ENCODE measurements at regions of chr16 and their contacts with region 1.

Region 1: DNA sequence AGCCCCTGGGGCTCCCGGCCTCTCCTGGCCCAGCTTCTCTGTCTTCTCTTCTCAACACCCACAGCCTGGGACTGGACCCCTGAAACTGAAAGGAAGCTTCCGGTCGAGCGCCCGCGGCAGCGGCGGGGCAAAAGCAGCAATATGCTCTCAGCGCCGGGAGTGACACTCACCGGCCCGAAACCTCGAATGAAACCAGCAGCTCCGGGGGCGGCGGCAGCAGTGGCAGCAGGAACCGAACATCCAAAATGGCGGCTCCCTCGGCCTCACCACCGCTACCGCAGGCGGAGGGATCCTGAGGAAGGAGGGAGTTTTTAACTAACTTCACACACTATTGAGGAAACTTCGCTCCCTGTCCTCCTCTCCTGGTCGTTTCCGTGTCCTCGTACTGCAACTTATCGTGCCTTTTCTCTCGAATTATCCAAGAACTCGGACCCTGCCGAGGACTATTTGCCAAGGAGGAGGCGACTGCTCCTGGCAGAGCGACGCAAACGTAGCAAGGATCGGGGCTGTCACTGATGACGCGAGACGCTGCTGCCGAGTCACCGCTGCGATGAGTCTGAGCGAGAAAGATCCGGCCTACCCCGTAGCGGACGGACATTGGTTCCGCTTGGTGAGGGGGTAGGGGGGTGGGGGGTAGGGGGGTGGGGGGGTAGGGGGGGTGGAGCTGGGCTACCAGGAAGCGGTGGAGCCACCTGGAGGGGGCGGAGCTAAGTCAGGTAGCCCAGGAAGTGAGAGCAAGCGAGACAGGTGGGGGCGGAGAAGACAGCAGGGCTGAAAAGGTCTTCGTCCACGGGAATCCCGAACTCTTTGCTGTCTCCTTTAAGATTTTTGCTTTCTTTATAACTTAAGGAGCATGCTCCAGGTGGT is at the start of gene AP1G1:
- DNase-seq: peak; percentile 92 to 95
- H3K4me3 ChIP-seq: peak within 1 kb of the TSS; percentile 93
- H3K27ac ChIP-seq: peak within 1 kb of the TSS; percentile 95
- H3K4me1 ChIP-seq: peaks cover 18% of the 10 kb centered on the region
- H3K27me3 ChIP-seq: no peaks in the 10 kb centered on the region
- CTCF ChIP-seq: no peak
- total RNA-seq, gene AP1G1: 60.1 and 72.5 TPM in 2 replicates

Region 2: DNA sequence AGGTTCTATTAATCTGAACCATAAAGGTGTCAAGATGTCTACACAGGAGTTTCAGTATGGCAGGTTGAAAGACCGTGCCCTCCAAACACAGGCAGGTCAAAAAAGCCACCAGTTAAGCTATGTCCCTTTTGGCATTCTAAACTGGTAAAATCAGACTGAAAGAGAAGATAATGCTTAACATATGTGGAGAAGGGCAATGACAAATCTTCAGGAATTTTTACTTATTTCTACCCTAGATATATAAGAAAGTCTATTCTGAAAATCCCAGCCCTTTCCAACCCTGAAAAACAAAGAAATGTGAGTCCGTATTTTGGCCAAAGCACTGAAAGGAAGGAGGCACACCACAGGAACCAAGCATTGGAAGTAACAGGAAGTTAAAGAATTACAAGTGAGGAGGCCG is 16.6 kb before region 1 on chr16:
- CTCF ChIA-PET with region 1: no interaction called
- POLR2A ChIA-PET with region 1: interaction called, 16 read pairs
- intact Hi-C with region 1: no loop called
- DNase-seq: no peak
- H3K4me3 ChIP-seq: no peak overlapping the region
- H3K27ac ChIP-seq: no peak overlapping the region
- H3K4me1 ChIP-seq: no peaks in the 10 kb centered on the region
- H3K27me3 ChIP-seq: no peaks in the 10 kb centered on the region
- CTCF ChIP-seq: no peak

Region 3: GRCh38 chr16:71845639-71846430 is 37.0 kb after region 1 on chr16 and contains the start of gene ATXN1L:
- CTCF ChIA-PET with region 1: no interaction called
- POLR2A ChIA-PET with region 1: no interaction called
- intact Hi-C with region 1: loop called (anchors 2 kb)
- DNase-seq: peak; percentile 75 to 92
- H3K4me3 ChIP-seq: peak within 1 kb of the TSS; percentile 89
- H3K27ac ChIP-seq: peak within 1 kb of the TSS; percentile 57
- H3K4me1 ChIP-seq: peaks cover 9% of the 10 kb centered on the region
- H3K27me3 ChIP-seq: no peaks in the 10 kb centered on the region
- CTCF ChIP-seq: no peak
- total RNA-seq, gene ATXN1L: 18.2 and 25.3 TPM in 2 replicates

Region 4: DNA sequence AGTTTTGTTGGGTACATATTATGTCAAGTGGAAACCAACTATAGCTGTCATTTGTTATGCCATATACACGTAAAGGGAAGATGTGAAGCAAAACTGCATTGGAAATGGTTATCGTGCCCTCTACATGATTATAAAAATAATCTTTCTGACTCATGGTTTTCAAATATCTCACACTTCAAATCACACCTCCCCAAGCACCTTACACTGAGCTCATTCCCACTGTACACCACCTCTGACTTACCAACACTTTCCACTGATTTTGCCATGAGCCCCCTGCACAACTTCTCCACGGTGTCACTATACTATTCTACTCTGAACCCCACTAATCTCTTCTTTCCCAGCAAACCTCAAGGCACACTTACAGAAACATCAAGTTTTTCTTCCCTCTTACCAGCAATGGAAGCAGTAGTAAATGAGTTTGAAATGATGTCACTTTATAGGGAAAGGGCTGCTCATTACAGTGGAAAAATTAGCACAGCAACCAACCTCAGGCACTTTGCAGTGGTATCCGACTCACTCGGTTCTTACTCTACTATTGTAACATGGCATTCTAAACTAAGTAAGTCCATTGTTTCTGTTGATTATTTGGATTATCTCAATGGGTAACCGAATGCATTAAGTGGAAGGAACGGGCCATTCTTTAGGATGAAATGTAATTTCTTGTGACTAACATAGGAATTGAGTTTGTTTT is 56.5 kb after region 1 on chr16:
- CTCF ChIA-PET with region 1: no interaction called
- POLR2A ChIA-PET with region 1: interaction called, 12 read pairs
- intact Hi-C with region 1: no loop called
- DNase-seq: no peak
- H3K4me3 ChIP-seq: no peak overlapping the region
- H3K27ac ChIP-seq: no peak overlapping the region
- H3K4me1 ChIP-seq: no peaks in the 10 kb centered on the region
- H3K27me3 ChIP-seq: no peaks in the 10 kb centered on the region
- CTCF ChIP-seq: no peak

Region 5: DNA sequence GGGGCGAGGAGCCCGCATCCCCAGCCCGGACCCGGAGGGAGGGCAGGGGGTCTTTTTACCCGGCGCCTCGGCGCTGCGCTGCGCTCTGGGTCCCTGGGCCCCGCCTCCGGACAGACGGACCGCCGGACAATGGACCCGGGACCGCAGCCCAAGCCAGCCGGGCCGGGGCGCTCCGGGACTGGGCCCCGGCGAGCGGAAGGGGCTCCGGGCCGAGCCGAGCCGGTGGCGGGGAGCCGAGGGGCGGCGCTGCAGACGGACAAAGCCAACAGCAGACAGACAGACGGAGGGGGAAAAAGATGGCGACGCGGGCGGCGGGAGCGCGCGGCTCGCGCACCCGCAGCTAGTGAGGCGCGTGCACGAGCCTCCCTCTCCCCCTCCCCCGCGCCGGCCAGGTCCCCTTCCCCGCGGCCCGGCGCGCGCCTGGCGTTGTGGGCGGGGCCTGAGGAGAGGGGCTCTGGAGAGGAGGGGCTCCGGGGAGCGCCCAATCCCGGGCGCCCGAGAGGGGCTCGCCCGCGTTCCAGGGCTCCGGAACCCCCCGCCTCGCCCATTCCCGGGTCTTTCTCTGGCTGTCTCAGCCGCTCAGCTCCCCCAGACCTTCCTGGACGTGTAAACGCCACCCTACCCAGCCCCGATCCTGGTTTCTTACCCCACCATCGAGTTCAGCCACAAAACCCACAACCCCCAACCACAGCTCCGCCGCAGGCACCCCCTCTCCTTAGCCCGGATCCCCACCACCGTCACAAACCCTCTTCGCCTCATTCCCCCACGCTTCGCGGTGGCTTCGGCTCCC is 75.2 kb after region 1 on chr16 and contains the start of gene ZNF821:
- CTCF ChIA-PET with region 1: no interaction called
- POLR2A ChIA-PET with region 1: interaction called, 7 read pairs
- intact Hi-C with region 1: loop called (anchors 2 kb)
- DNase-seq: peak in 1 of 2 experiments; percentile 68
- H3K4me3 ChIP-seq: peak within 1 kb of the TSS; percentile 83
- H3K27ac ChIP-seq: peak within 1 kb of the TSS; percentile 39; the same call in 1 of the 2 replicates
- H3K4me1 ChIP-seq: peaks cover 19% of the 10 kb centered on the region
- H3K27me3 ChIP-seq: no peaks in the 10 kb centered on the region
- CTCF ChIP-seq: peak; percentile 57; the same call in 1 of the 2 replicates
- total RNA-seq, gene ZNF821: 5.9 TPM in 2 replicates

Region 6: GRCh38 chr16:71894921-71895678 is 86.3 kb after region 1 on chr16 and contains the start of gene IST1:
- CTCF ChIA-PET with region 1: no interaction called
- POLR2A ChIA-PET with region 1: interaction called, 5 read pairs
- intact Hi-C with region 1: loop called (anchors 1 kb)
- DNase-seq: peak; percentile 89 to 96
- H3K4me3 ChIP-seq: peak within 1 kb of the TSS; percentile 100
- H3K27ac ChIP-seq: peak within 1 kb of the TSS; percentile 90
- H3K4me1 ChIP-seq: peaks cover 23% of the 10 kb centered on the region
- H3K27me3 ChIP-seq: no peaks in the 10 kb centered on the region
- CTCF ChIP-seq: no peak
- total RNA-seq, gene IST1: 177 and 204 TPM in 2 replicates

Region 7: GRCh38 chr16:71911121-71911520 is 102.3 kb after region 1 on chr16:
- CTCF ChIA-PET with region 1: no interaction called
- POLR2A ChIA-PET with region 1: no interaction called
- intact Hi-C with region 1: no loop called
- DNase-seq: no peak
- H3K4me3 ChIP-seq: no peak overlapping the region
- H3K27ac ChIP-seq: no peak overlapping the region
- H3K4me1 ChIP-seq: no peaks in the 10 kb centered on the region
- H3K27me3 ChIP-seq: no peaks in the 10 kb centered on the region
- CTCF ChIP-seq: no peak

Region 8: GRCh38 chr16:73142052-73142880 is 1333.4 kb after region 1 on chr16:
- CTCF ChIA-PET with region 1: no interaction called
- POLR2A ChIA-PET with region 1: interaction called, 12 read pairs
- intact Hi-C with region 1: no loop called
- DNase-seq: no peak
- H3K4me3 ChIP-seq: no peak overlapping the region
- H3K27ac ChIP-seq: no peak overlapping the region
- H3K4me1 ChIP-seq: no peaks in the 10 kb centered on the region
- H3K27me3 ChIP-seq: peaks cover 15% of the 10 kb centered on the region; the same call in 1 of the 2 replicates
- CTCF ChIP-seq: no peak